ENCODE measurements at regions of chr13 and their contacts with region 1.

Region 1: GRCh38 chr13:84896128-84896527 is 903.1 kb downstream of the SLITRK6 start:
- DNase-seq: peak; percentile 71 to 87 (median 78)
- H3K4me3 ChIP-seq: no peak overlapping the region
- H3K27ac ChIP-seq: no peak overlapping the region
- H3K4me1 ChIP-seq: no peaks in the 10 kb centered on the region
- H3K27me3 ChIP-seq: no peaks in the 10 kb centered on the region

Region 2: DNA sequence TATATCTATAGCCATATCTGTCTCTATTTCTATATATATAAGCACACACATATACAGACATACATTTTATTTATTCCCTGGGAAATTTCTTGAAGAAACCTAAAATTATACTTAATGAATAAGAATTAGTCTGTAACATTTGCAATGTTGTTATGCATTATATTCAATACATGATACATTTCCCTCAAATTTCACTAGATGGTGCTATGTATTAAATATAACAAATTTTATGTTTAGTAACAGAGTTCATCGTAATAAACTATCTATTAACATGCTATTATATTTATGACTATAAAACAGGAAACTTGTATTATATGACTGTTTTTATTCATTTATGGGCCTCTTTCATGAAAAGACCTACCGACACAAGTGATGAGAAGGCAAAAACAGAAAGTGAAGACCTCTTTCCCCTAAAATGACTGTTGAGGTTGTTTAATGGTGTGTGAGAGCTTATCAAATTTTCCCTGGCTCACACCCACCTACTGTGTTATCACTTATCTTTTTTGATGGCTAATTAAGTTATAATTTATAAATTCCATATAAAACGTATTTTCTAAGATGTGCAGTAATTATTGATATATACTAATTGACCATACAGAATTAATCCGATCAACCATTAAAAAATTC is 21.2 kb after region 1 on chr13:
- CTCF ChIA-PET with region 1: no interaction called
- POLR2A ChIA-PET with region 1: no interaction called
- DNase-seq: peak; percentile 16 to 52 (median 33)
- H3K4me3 ChIP-seq: peak overlapping the region in 2 of 7 experiments; percentile 19 to 23
- H3K27ac ChIP-seq: no peak overlapping the region
- H3K4me1 ChIP-seq: no peaks in the 10 kb centered on the region
- H3K27me3 ChIP-seq: no peaks in the 10 kb centered on the region

Region 3: DNA sequence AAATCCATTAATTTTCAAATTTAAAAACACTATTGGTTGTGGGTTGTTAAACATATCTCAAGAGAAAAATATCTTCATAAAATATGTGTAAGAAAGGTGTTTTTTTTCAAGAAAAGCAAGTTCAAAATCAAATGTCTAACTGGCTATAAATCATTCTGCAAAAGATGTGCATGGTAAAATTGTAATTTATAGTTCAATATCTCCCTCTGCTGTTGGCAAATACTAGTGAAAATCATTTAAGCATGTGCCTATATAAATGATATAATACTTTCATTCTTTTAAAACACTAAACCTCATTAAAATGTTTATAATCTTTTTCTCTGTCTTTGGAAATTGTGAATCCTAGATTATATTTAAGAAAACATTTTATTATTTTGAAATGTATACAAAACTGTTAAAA is 920.3 kb after region 1 on chr13:
- CTCF ChIA-PET with region 1: interaction called, 28 read pairs
- POLR2A ChIA-PET with region 1: no interaction called
- DNase-seq: peak in 2 of 3 donors; percentile 30 to 33
- H3K4me3 ChIP-seq: no peak overlapping the region
- H3K27ac ChIP-seq: no peak overlapping the region
- H3K4me1 ChIP-seq: no peaks in the 10 kb centered on the region
- H3K27me3 ChIP-seq: no peaks in the 10 kb centered on the region

Region 4: DNA sequence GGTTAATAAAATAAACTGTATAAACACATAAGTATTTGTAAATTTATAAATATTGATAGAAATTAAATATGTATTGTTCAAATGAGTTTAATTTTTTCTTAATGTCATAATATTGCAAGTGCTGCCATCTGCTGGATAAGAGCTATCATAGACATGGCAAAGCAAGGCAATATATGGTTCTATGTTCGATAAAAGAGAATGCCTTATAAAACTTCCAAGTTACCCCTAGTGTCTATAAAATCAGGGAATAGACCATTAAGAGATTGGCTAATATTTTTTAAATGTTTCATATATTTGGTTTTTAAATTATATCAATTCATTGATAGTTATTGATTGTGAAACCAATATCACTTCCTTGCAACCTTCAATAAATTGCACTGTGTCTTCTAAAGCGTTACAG is 932.0 kb after region 1 on chr13:
- CTCF ChIA-PET with region 1: interaction called, 12 read pairs
- POLR2A ChIA-PET with region 1: no interaction called
- DNase-seq: peak; percentile 28 to 54 (median 33)
- H3K4me3 ChIP-seq: no peak overlapping the region
- H3K27ac ChIP-seq: no peak overlapping the region
- H3K4me1 ChIP-seq: no peaks in the 10 kb centered on the region
- H3K27me3 ChIP-seq: no peaks in the 10 kb centered on the region